ENCODE measurements at regions of chr2 and their contacts with region 1.

Region 1: GRCh38 chr2:105521205-105521604 is 122.4 kb upstream of the FHL2 start:
- DNase-seq: peak; percentile 18
- ATAC-seq: peak in 1 of 2 experiments; percentile 44; a peak in 2 of 6 replicates
- H3K4me3 ChIP-seq: no peak overlapping the region
- H3K27ac ChIP-seq: peak overlapping the region in 1 of 2 experiments; percentile 24; a peak in 1 of 6 replicates
- H3K4me1 ChIP-seq: peaks cover 10% of the 10 kb centered on the region; the same call in 2 of the 3 replicates
- CTCF ChIP-seq: peak; percentile 90
- EP300 ChIP-seq: no peak
- POLR2A ChIP-seq: no peak
- RAD21 ChIP-seq: peak; percentile 85 to 95

Region 2: GRCh38 chr2:105344704-105345345 is 176.4 kb before region 1 on chr2:
- CTCF ChIA-PET with region 1: interaction called, 54 read pairs
- POLR2A ChIA-PET with region 1: no interaction called
- DNase-seq: peak; percentile 18 to 44
- ATAC-seq: peak; percentile 74 to 85; a peak in 5 of 6 replicates
- H3K4me3 ChIP-seq: no peak overlapping the region
- H3K27ac ChIP-seq: no peak overlapping the region
- H3K4me1 ChIP-seq: no peaks in the 10 kb centered on the region
- CTCF ChIP-seq: peak; percentile 70
- EP300 ChIP-seq: no peak
- POLR2A ChIP-seq: no peak
- RAD21 ChIP-seq: peak; percentile 53 to 73

Region 3: DNA sequence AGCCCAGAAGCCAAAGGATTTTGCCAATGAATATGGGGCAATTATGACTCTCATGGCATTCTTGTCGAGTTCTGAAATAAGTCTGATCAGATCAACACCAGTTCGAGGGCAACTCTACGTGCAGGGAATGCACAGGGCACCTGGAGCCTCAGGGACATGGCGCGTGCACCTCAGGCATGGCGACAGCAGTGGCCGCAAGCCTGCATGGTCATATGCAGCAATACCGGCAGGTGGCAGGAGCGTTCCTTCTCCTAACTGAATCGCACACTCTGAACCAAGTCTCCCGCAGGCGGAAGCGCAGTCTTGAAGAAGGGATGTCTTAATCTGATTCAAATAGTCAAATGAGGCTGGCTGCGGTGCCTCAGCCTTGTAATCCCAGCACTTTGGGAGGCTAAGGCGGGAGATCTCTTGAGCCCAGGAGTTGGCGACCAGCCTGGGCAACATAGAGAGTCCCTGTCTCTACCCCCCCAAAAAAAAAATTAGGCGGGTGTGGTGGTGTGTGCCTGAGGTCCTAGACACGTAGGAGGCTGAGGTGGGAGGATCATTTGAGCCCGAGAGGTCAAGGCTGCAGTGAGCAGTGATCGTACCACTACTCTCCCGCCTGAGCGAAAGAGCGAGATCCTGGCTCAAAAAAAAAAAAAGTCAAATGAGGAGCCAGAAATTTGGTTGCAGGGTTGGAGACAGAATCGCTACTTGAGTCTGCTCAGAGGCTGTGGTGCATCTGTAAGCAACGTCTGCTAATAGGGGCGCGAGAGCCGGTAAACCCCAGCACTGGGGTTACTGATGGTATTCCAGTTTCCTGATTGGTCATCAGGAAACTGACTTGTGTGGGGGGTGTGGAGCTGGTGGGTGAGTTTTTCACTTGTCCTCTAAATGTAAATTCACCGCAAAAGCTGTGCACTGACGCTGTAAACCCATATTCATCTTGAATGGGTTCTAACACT is 151.2 kb before region 1 on chr2:
- CTCF ChIA-PET with region 1: interaction called, 146 read pairs
- POLR2A ChIA-PET with region 1: no interaction called
- DNase-seq: peak; percentile 58 to 86
- ATAC-seq: peak; percentile 94 to 97
- H3K4me3 ChIP-seq: no peak overlapping the region
- H3K27ac ChIP-seq: peak overlapping the region; percentile 12 to 74; a peak in 4 of 6 replicates
- H3K4me1 ChIP-seq: peaks cover 8% of the 10 kb centered on the region; the same call in 2 of the 3 replicates
- CTCF ChIP-seq: peak; percentile 89
- EP300 ChIP-seq: no peak
- POLR2A ChIP-seq: no peak
- RAD21 ChIP-seq: peak; percentile 93 to 95

Region 4: DNA sequence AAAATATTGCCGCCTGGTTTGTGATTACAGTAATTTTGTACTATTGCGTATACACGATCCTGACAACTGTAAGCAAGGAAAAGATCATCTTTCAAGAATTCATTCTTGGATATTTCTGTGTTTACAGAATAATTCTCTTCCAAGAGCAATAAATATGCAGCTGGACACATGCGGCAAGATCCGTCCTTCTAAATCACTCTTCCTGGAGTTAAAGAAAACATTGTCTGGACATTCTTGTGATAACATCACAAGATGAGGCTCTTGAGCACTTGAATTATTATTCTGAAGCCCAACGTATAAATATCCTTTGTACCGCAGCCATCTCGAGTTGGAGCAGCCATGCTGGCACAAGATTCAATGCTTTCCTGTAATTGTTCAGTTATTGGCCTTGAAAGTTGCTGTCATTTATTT is 132.2 kb before region 1 on chr2:
- CTCF ChIA-PET with region 1: interaction called, 12 read pairs
- POLR2A ChIA-PET with region 1: no interaction called
- DNase-seq: no peak
- ATAC-seq: no peak
- H3K4me3 ChIP-seq: no peak overlapping the region
- H3K27ac ChIP-seq: no peak overlapping the region; a peak in 1 of 6 replicates
- H3K4me1 ChIP-seq: peaks cover 51% of the 10 kb centered on the region
- CTCF ChIP-seq: no peak
- EP300 ChIP-seq: no peak
- POLR2A ChIP-seq: no peak
- RAD21 ChIP-seq: no peak

Region 5: DNA sequence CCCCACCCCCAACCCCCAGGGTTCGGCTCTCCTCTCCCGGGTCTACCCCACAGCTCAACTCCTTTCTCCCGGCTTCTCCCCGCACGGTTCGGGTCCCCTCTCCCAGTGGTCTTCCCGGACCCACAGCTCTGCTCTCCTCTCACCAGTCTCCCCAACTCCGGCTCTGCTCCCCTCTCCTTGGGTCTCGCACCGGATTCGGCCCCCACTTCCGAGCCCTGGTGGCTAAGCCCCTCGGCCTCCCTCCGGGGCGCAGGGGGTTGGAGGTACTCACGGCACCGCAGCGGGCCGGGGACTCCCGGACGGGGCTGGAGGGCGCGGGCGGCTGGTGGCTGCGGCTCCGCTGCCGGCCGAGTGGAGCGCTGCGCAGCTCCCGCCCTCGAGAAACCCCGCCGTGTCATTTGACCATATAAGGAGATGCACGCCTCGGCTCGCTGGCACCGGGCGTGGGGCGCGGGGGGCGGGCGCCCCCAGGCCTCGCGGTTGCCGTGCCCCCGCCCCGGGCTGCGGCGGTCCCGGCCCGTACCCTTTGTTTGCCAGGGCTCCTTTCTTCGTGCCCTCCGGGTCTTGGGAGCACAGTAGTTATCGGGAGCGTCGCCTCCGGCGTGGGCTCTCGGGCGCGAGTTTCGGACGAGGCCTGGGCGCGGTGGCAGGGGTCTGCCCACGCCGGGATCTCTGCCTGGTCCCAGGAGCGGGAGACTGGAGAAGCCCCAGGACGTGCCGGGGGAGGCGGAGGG is 122.3 kb before region 1 on chr2 and contains the start of gene FHL2:
- CTCF ChIA-PET with region 1: interaction called, 12 read pairs
- POLR2A ChIA-PET with region 1: no interaction called
- DNase-seq: peak; percentile 62 to 81
- ATAC-seq: peak; percentile 88 to 94
- H3K4me3 ChIP-seq: peak within 1 kb of the TSS; percentile 81
- H3K27ac ChIP-seq: peak within 1 kb of the TSS; percentile 91 to 99
- H3K4me1 ChIP-seq: peaks cover 37% of the 10 kb centered on the region
- CTCF ChIP-seq: peak; percentile 35
- EP300 ChIP-seq: no peak
- POLR2A ChIP-seq: peak; percentile 75
- RAD21 ChIP-seq: no peak; a peak in 1 of 5 replicates
- polyA plus RNA-seq, gene FHL2: 85.9 and 97.6 TPM in 2 replicates

Region 6: DNA sequence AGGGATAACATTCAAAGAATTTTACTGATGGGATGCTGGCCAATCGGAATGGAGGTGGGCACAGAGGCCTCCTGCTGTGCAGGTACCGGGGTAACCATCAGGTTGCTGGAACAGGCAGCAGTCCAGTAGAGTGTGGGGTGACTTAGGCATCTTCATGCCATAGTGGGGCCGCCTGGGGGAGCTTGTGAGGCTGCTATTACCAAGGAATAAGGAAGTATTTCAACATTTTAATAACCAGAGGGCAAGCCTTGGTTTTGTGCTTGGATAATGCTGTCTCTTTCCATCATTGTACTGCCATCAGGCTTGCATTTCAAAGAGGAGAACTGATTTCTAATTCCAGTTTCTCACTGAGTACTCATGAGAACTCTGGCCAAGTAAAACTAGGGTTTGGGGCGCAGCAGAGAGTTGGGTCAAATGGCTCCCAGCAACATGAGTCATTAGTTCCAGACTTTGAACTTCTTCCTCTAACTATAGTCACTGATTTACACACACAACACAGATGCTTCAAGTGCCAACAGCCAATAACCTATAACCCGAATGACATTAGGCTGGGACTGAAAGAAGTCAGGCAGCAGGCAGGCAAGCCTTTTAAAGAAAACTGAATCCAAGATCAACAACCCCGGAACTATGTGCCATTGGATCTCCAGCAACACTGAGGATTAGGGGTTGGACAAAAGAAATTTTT is 66.3 kb before region 1 on chr2:
- CTCF ChIA-PET with region 1: interaction called, 13 read pairs
- POLR2A ChIA-PET with region 1: no interaction called
- DNase-seq: peak; percentile 50 to 88
- ATAC-seq: peak; percentile 91
- H3K4me3 ChIP-seq: peak overlapping the region; percentile 19; the same call in 2 of the 3 replicates
- H3K27ac ChIP-seq: peak overlapping the region; percentile 86 to 91
- H3K4me1 ChIP-seq: peaks cover 35% of the 10 kb centered on the region
- CTCF ChIP-seq: peak; percentile 59
- EP300 ChIP-seq: no peak; a peak in 1 of 5 replicates
- POLR2A ChIP-seq: no peak
- RAD21 ChIP-seq: peak; percentile 62 to 64

Region 7: DNA sequence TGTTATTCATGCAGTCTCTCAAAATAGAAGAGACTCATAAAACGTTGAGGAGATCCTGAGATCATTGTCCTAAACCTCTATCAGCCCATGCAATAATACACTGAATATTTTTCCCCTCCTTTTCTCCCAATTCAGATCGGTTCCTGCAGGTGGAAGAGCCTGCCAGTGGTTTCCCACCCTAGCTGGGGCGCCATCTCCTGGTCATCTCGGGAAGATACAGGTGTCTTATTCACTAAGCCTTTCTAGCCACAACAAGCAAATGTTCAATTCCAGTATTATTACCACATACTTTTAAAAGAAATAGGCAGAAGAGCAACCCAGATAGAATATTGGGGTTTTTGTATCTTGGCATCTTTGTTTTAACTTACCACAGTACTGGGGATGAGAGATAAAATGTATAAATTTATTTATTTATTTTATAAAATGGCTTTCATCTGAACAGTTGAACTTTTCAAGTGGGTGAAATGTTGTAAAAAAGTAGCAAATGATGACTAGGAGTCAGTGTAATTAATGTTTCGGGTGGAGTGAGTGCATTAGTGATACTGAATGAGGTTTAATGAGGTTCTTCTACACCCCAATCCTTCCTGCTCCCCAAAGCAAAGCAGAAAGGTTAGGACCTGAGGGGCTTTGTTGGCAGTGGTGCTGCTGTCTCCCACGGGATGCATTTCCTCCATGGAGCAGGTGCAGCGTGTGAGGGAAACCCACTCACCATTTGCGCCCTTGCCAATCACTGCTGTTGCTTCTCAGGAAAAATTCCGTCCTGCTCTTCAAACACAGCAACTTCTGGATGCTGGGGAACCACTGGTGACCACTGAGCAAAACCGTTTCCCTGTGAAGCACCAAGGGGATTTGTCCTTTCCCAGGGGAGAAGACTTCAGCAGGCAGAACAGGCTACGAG is 24.8 kb after region 1 on chr2:
- CTCF ChIA-PET with region 1: interaction called, 15 read pairs
- POLR2A ChIA-PET with region 1: no interaction called
- DNase-seq: peak; percentile 68 to 74
- ATAC-seq: peak; percentile 80 to 94
- H3K4me3 ChIP-seq: no peak overlapping the region
- H3K27ac ChIP-seq: no peak overlapping the region
- H3K4me1 ChIP-seq: no peaks in the 10 kb centered on the region
- CTCF ChIP-seq: peak; percentile 76
- EP300 ChIP-seq: no peak
- POLR2A ChIP-seq: no peak
- RAD21 ChIP-seq: peak; percentile 61 to 70; a peak in 4 of 5 replicates